Lower leg skin (tissue), 4 donors: ENCODE measurements at regions of chr19 and their contacts with region 1.

Region 1: GRCh38 chr19:10928525-10929401 is at the starts of genes TIMM29 and YIPF2:
- DNase-seq: peak; percentile 97 to 99
- H3K4me3 ChIP-seq: peak within 1 kb of the TSS; percentile 71
- CTCF ChIP-seq: no peak
- POLR2A ChIP-seq: no peak
- total RNA-seq, gene TIMM29: 39.6 to 53.2 (median 49.8) TPM
- total RNA-seq, gene YIPF2: 38.4 to 55.3 (median 47.8) TPM

Region 2: GRCh38 chr19:10870955-10871603 is 57.7 kb before region 1 on chr19 and contains the start of gene CARM1:
- intact Hi-C with region 1: loop called (anchors 10 kb)
- DNase-seq: peak; percentile 98 to 100
- H3K4me3 ChIP-seq: peak within 1 kb of the TSS; percentile 77
- CTCF ChIP-seq: no peak
- POLR2A ChIP-seq: no peak
- total RNA-seq, gene CARM1: 19.8 to 24.9 (median 21.2) TPM